ENCODE measurements at regions of chr10 and their contacts with region 1.

Region 1: GRCh38 chr10:28663576-28664313 is 13.6 kb upstream of the BAMBI start:
- DNase-seq: peak; percentile 64
- H3K4me3 ChIP-seq: no peak overlapping the region
- H3K27ac ChIP-seq: no peak overlapping the region
- H3K4me1 ChIP-seq: no peaks in the 10 kb centered on the region
- H3K27me3 ChIP-seq: peaks cover 2% of the 10 kb centered on the region
- CTCF ChIP-seq: peak; percentile 71 to 91 (median 88)
- POLR2A ChIP-seq: no peak

Region 2: GRCh38 chr10:28580825-28581224 is 82.9 kb before region 1 on chr10:
- intact Hi-C with region 1: no loop called
- DNase-seq: no peak
- H3K4me3 ChIP-seq: no peak overlapping the region
- H3K27ac ChIP-seq: no peak overlapping the region
- H3K4me1 ChIP-seq: no peaks in the 10 kb centered on the region
- H3K27me3 ChIP-seq: no peaks in the 10 kb centered on the region
- CTCF ChIP-seq: no peak
- POLR2A ChIP-seq: no peak

Region 3: GRCh38 chr10:28722065-28722803 is 58.5 kb after region 1 on chr10:
- intact Hi-C with region 1: no loop called
- DNase-seq: no peak
- H3K4me3 ChIP-seq: peak overlapping the region; percentile 12 to 31
- H3K27ac ChIP-seq: no peak overlapping the region
- H3K4me1 ChIP-seq: no peaks in the 10 kb centered on the region
- H3K27me3 ChIP-seq: no peaks in the 10 kb centered on the region
- CTCF ChIP-seq: no peak
- POLR2A ChIP-seq: no peak

Region 4: DNA sequence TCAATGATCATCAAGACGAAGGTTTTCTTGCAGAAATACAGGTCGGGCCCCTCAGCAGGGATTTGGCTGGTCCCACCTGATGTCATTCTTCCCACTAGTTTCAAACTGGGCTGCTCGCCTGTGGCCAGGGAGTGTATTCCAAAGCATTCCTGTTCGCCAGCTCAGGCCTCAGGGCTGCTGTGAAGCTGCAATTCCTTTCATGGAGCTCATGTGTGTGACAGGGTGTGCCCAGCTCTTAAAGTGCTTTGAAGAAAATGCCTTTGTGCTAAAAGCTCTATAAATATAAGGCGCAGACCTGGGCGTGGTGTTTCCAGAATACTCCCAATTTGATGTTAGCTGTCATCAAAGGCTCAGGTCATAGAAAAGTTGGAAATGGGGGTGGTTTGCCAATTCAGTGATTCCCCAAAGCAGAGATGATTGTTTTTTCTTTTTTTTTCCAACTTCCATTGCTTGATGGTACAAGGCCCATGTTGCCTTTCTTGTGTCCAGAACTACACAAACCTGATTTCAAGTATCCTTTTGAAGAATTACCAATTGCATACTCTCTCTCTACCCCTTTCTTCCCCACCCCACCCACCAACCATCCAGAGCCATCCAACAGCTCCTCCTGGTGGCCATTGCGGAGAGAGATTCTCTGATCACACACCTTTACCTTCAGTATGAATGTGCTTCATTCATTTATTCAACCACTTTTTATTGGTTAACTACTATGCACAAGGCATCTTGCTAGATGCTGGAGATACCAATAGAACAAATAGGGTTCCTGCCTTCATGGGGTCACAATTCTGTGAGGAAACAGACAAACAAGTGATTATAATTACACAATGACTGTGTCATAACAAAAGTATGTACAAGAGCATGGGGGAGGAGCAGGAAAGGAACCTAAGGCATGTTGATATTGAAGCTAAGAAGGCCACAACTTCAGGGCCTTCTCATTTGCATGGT is 327.9 kb after region 1 on chr10:
- intact Hi-C with region 1: loop called (anchors 5 kb)
- DNase-seq: peak; percentile 6
- H3K4me3 ChIP-seq: no peak overlapping the region
- H3K27ac ChIP-seq: no peak overlapping the region
- H3K4me1 ChIP-seq: no peaks in the 10 kb centered on the region
- H3K27me3 ChIP-seq: no peaks in the 10 kb centered on the region
- CTCF ChIP-seq: peak; percentile 25 to 61 (median 56)
- POLR2A ChIP-seq: no peak

Region 5: GRCh38 chr10:29131952-29132820 is 468.4 kb after region 1 on chr10:
- intact Hi-C with region 1: loop called (anchors 5 kb)
- DNase-seq: no peak
- H3K4me3 ChIP-seq: no peak overlapping the region
- H3K27ac ChIP-seq: no peak overlapping the region
- H3K4me1 ChIP-seq: no peaks in the 10 kb centered on the region
- H3K27me3 ChIP-seq: no peaks in the 10 kb centered on the region
- CTCF ChIP-seq: no peak
- POLR2A ChIP-seq: no peak

Measured in prostate gland (tissue), 2 donors.